ENCODE measurements at regions of chr4 and their contacts with region 1.

Region 1: GRCh38 chr4:87093443-87094123 is 126.8 kb downstream of the KLHL8 start:
- DNase-seq: no peak
- H3K4me3 ChIP-seq: no peak overlapping the region
- H3K27ac ChIP-seq: peak overlapping the region in 1 of 2 donors; percentile 44
- H3K4me1 ChIP-seq: peaks cover 6 to 28% (median 15%) of the 10 kb centered on the region in 4 donors
- H3K27me3 ChIP-seq: no peaks in the 10 kb centered on the region
- CTCF ChIP-seq: peak; percentile 46 to 48

Region 2: GRCh38 chr4:86927843-86928395 is 165.7 kb before region 1 on chr4:
- intact Hi-C with region 1: loop called (anchors 5 kb)
- DNase-seq: peak in 1 of 2 donors; percentile 63
- H3K4me3 ChIP-seq: no peak overlapping the region
- H3K27ac ChIP-seq: peak overlapping the region; percentile 16 to 23
- H3K4me1 ChIP-seq: no peaks in the 10 kb centered on the region
- H3K27me3 ChIP-seq: no peaks in the 10 kb centered on the region
- CTCF ChIP-seq: no peak